PC-3 (cell line): ENCODE measurements at regions of chr12 and their contacts with region 1.

Region 1: DNA sequence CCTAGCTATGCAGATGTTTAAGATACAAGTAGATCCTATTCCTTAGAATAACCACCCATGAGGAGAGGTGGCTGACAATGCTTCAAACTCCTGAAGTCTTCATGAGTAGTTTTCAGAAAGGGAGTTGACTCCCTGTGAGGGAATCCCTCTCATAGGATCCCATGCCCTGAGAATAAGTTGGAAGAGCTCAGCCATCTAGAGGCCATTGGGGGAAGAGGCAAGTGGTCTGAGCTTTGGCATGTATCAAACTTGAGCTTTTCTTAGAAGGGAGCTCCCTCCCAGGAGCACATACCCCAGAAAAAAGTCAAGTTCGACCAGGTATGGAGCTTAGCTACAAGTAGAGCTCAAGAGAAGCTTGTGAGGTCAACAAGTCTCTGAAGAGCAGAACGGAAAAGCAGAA is 165.7 kb upstream of the RBM19 start:
- DNase-seq: no peak
- ATAC-seq: no peak
- H3K4me3 ChIP-seq: no peak overlapping the region
- H3K27ac ChIP-seq: no peak overlapping the region
- H3K4me1 ChIP-seq: no peaks in the 10 kb centered on the region
- H3K27me3 ChIP-seq: peaks cover 16% of the 10 kb centered on the region
- CTCF ChIP-seq: peak; percentile 18; the same call in 1 of the 2 replicates

Region 2: GRCh38 chr12:113747017-113747416 is 384.8 kb before region 1 on chr12:
- CTCF ChIA-PET with region 1: no interaction called
- POLR2A ChIA-PET with region 1: no interaction called
- intact Hi-C with region 1: no loop called
- DNase-seq: no peak
- ATAC-seq: no peak
- H3K4me3 ChIP-seq: no peak overlapping the region
- H3K27ac ChIP-seq: no peak overlapping the region
- H3K4me1 ChIP-seq: no peaks in the 10 kb centered on the region
- H3K27me3 ChIP-seq: no peaks in the 10 kb centered on the region
- CTCF ChIP-seq: no peak

Region 3: GRCh38 chr12:114938487-114939210 is 806.8 kb after region 1 on chr12:
- CTCF ChIA-PET with region 1: no interaction called
- POLR2A ChIA-PET with region 1: no interaction called
- intact Hi-C with region 1: no loop called
- DNase-seq: no peak
- ATAC-seq: no peak
- H3K4me3 ChIP-seq: no peak overlapping the region
- H3K27ac ChIP-seq: no peak overlapping the region
- H3K4me1 ChIP-seq: peaks cover 15% of the 10 kb centered on the region
- H3K27me3 ChIP-seq: no peaks in the 10 kb centered on the region
- CTCF ChIP-seq: no peak

Region 4: GRCh38 chr12:115801871-115802270 is 1670.0 kb after region 1 on chr12:
- CTCF ChIA-PET with region 1: no interaction called
- POLR2A ChIA-PET with region 1: no interaction called
- intact Hi-C with region 1: loop called (anchors 10 kb)
- DNase-seq: no peak
- ATAC-seq: no peak
- H3K4me3 ChIP-seq: no peak overlapping the region
- H3K27ac ChIP-seq: no peak overlapping the region
- H3K4me1 ChIP-seq: no peaks in the 10 kb centered on the region
- H3K27me3 ChIP-seq: 0 out of 2 replicates have a peak, but pooled peaks cover 6% of the 10 kb centered on the region
- CTCF ChIP-seq: no peak